ENCODE measurements at regions of chr1 and their contacts with region 1.

Region 1: DNA sequence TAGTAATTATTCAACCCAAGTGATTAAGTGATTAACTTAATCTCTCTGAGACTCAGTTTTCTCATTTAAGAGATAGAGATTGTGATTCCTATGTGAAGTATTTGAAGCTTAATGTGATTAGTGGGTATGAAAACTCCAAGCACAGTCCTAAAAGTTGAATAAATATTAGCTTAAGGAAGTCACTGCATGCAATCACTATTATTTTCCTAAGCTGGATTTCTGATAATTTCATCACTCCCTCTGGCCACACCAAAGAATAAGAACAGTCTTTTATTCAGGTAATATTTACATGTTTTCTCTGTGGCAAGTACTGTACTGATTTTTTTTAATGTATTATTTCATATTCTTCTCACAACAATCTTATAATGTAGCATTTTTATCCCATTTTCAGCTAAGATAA is 31.1 kb downstream of the CD55 start:
- DNase-seq: no peak
- ATAC-seq: no peak
- H3K4me3 ChIP-seq: no peak overlapping the region
- H3K4me3 Mint-ChIP-seq: peak overlapping the region in 1 of 10 donors; percentile 29
- H3K27ac ChIP-seq: no peak overlapping the region
- H3K27ac Mint-ChIP-seq: no peak overlapping the region
- H3K4me1 ChIP-seq: peaks cover 0 to 20% of the 10 kb centered on the region in 2 donors
- H3K4me1 Mint-ChIP-seq: peaks cover 28 to 98% (median 83%) of the 10 kb centered on the region in 7 donors
- H3K27me3 ChIP-seq: no peaks in the 10 kb centered on the region
- H3K27me3 Mint-ChIP-seq: no peaks in the 10 kb centered on the region

Region 2: DNA sequence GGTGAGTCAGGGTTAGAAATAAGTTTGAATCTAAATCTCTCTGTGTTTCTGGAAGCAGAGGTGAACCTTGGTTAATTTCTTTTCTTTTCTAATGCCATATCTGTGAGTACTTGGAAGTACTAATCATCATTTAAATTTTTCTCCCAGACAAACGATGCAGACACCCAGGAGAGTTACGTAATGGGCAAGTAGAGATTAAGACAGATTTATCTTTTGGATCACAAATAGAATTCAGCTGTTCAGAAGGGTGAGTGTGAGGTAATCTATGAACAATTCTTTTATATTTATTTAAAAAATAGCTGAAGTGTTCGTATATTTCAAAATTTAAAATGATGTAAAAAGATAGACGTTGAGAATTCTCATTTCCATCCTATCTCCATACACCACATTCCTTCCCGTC is 237.3 kb before region 1 on chr1:
- CTCF ChIA-PET with region 1: no interaction called
- POLR2A ChIA-PET with region 1: no interaction called
- intact Hi-C with region 1: no loop called
- DNase-seq: no peak
- ATAC-seq: no peak
- H3K4me3 ChIP-seq: no peak overlapping the region
- H3K4me3 Mint-ChIP-seq: no peak overlapping the region
- H3K27ac ChIP-seq: no peak overlapping the region
- H3K27ac Mint-ChIP-seq: no peak overlapping the region
- H3K4me1 ChIP-seq: no peaks in the 10 kb centered on the region
- H3K4me1 Mint-ChIP-seq: no peaks in the 10 kb centered on the region
- H3K27me3 ChIP-seq: no peaks in the 10 kb centered on the region
- H3K27me3 Mint-ChIP-seq: peaks cover 0 to 25% (median 4%) of the 10 kb centered on the region in 5 donors

Region 3: DNA sequence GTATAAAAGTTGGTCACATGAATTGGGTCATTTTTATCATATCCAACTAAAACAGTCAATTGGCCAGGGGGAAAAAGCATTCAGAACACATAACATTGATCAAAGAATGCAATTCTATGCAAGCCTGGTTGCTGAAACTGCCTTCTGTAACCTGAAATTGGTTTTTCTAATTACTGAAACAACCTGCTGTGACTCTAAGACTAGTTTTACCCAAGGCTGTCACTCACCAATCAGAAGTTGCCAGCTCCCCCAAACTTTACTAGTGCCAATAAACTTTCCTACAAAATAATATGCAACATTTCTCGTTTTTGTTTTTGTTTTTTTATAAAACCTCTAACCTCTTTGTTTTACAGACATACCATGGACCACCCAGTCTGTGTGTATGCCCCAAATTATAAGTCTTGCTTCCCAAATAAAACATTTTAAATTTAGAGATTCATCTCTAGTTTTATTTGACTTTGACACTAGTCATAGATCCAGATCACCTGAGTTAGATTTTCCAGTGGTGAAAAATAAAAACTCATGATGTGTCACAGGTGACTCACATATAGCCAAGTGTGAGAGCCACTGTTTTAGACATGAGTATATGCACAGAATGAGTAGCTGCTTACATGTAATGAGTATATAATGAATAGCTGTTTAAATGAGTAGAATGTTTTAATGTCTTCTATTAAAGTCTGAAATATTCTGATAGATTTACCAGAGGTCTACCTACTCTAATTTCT is 37.3 kb after region 1 on chr1:
- CTCF ChIA-PET with region 1: no interaction called
- POLR2A ChIA-PET with region 1: no interaction called
- intact Hi-C with region 1: loop called (anchors 5 kb)
- DNase-seq: no peak
- ATAC-seq: no peak
- H3K4me3 ChIP-seq: no peak overlapping the region
- H3K4me3 Mint-ChIP-seq: no peak overlapping the region
- H3K27ac ChIP-seq: no peak overlapping the region
- H3K27ac Mint-ChIP-seq: no peak overlapping the region
- H3K4me1 ChIP-seq: no peaks in the 10 kb centered on the region
- H3K4me1 Mint-ChIP-seq: no peaks in the 10 kb centered on the region
- H3K27me3 ChIP-seq: no peaks in the 10 kb centered on the region
- H3K27me3 Mint-ChIP-seq: peaks cover 0 to 2% (median 0%) of the 10 kb centered on the region in 5 donors

Region 4: DNA sequence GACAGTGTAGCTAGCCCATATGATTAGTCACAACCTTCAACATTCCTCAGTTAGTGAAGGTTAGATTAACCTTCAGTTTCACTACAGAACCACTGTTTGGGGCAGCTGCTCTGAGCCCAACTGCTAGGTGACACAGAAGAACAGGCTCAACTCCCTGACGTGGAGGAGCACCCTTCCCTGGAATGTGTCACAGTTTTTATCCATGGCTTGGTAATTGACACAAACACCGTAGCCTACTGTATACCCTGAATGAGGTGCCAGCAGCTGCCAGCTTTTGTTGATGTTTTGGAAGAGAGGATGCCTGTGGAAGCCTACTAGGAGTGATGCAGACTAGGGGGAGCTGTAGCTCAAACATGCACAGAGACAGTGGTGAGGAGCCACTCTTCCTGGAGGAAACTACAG is 45.0 kb after region 1 on chr1:
- CTCF ChIA-PET with region 1: no interaction called
- POLR2A ChIA-PET with region 1: no interaction called
- intact Hi-C with region 1: loop called in 1 of 2 experiments (anchors 5 kb)
- DNase-seq: no peak
- ATAC-seq: no peak
- H3K4me3 ChIP-seq: no peak overlapping the region
- H3K4me3 Mint-ChIP-seq: no peak overlapping the region
- H3K27ac ChIP-seq: no peak overlapping the region
- H3K27ac Mint-ChIP-seq: peak overlapping the region in 1 of 9 donors; percentile 56
- H3K4me1 ChIP-seq: no peaks in the 10 kb centered on the region
- H3K4me1 Mint-ChIP-seq: peaks cover 0 to 8% (median 0%) of the 10 kb centered on the region in 7 donors
- H3K27me3 ChIP-seq: no peaks in the 10 kb centered on the region
- H3K27me3 Mint-ChIP-seq: peaks cover 0 to 2% (median 0%) of the 10 kb centered on the region in 5 donors

Region 5: DNA sequence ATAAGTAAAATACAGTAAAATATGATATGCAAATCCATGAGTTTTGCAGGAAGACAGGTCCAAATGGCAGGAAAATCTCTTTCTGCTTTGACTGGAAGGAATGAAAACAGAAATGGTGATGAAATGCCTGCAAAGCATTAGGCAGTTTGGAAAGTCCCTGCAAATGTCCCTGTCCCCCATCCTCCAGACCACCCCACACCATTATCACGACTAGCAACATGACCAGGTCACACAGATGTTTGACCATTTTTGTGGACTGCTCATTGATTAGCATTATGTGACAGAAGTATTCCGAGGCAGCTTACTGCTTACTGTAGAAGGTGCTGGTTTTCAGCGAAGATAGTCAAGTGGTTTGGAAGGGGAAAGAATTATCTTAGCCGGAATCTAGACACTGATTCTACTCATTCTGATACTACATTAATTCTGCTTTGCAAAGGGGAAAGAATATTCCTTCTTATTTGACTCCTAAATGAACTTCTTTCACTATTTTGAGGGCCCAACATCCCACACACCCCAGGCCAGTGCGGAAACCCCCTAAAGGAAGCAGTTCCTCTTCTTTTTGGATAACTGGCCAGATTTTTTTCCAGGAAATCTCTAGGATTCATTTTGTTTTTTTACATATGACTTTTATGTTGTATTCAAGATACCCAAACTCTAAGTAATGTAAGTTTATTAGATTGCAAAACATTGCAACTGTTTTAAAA is 92.1 kb after region 1 on chr1:
- CTCF ChIA-PET with region 1: no interaction called
- POLR2A ChIA-PET with region 1: no interaction called
- intact Hi-C with region 1: no loop called
- DNase-seq: no peak
- ATAC-seq: no peak
- H3K4me3 ChIP-seq: no peak overlapping the region
- H3K4me3 Mint-ChIP-seq: no peak overlapping the region
- H3K27ac ChIP-seq: no peak overlapping the region
- H3K27ac Mint-ChIP-seq: no peak overlapping the region
- H3K4me1 ChIP-seq: no peaks in the 10 kb centered on the region
- H3K4me1 Mint-ChIP-seq: no peaks in the 10 kb centered on the region
- H3K27me3 ChIP-seq: no peaks in the 10 kb centered on the region
- H3K27me3 Mint-ChIP-seq: peaks cover 0 to 39% (median 1%) of the 10 kb centered on the region in 5 donors

Region 6: DNA sequence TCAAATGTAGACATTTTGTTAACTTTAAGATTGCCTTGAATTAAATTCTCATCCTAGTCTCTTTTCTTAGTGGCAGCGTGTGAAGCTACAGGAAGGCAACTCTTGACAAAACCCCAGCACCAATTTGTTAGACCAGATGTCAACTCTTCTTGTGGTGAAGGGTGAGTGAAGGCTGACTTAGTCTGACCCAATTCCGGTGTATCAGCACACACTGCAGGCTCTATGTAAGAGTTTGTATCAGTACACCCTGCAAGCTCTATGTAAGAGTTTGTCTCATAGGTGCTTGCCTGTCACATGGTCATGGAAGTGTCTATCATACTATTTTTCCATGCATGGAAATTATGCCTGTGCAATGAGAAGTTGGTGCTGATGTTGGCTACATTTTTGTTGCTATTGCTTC is 118.4 kb after region 1 on chr1:
- CTCF ChIA-PET with region 1: no interaction called
- POLR2A ChIA-PET with region 1: no interaction called
- intact Hi-C with region 1: no loop called
- DNase-seq: peak in 7 of 9 donors; percentile 45 to 80 (median 65)
- ATAC-seq: peak; percentile 93
- H3K4me3 ChIP-seq: no peak overlapping the region
- H3K4me3 Mint-ChIP-seq: peak overlapping the region in 4 of 10 donors; percentile 2 to 55 (median 24)
- H3K27ac ChIP-seq: no peak overlapping the region
- H3K27ac Mint-ChIP-seq: peak overlapping the region in 7 of 9 donors; percentile 53 to 91 (median 63)
- H3K4me1 ChIP-seq: peaks cover 0 to 14% of the 10 kb centered on the region in 2 donors
- H3K4me1 Mint-ChIP-seq: peaks cover 2 to 33% (median 24%) of the 10 kb centered on the region in 7 donors
- H3K27me3 ChIP-seq: no peaks in the 10 kb centered on the region
- H3K27me3 Mint-ChIP-seq: peaks cover 0 to 7% (median 0%) of the 10 kb centered on the region in 5 donors

Region 7: GRCh38 chr1:207762622-207763021 is 410.1 kb after region 1 on chr1:
- CTCF ChIA-PET with region 1: no interaction called
- POLR2A ChIA-PET with region 1: no interaction called
- intact Hi-C with region 1: no loop called
- DNase-seq: no peak
- ATAC-seq: no peak
- H3K4me3 ChIP-seq: no peak overlapping the region
- H3K4me3 Mint-ChIP-seq: no peak overlapping the region
- H3K27ac ChIP-seq: no peak overlapping the region
- H3K27ac Mint-ChIP-seq: no peak overlapping the region
- H3K4me1 ChIP-seq: no peaks in the 10 kb centered on the region
- H3K4me1 Mint-ChIP-seq: peaks cover 7 to 14% (median 10%) of the 10 kb centered on the region in 7 donors
- H3K27me3 ChIP-seq: no peaks in the 10 kb centered on the region
- H3K27me3 Mint-ChIP-seq: no peaks in the 10 kb centered on the region